OCI-LY7 (cell line): ENCODE measurements at regions of chr13 and their contacts with region 1.

Region 1: DNA sequence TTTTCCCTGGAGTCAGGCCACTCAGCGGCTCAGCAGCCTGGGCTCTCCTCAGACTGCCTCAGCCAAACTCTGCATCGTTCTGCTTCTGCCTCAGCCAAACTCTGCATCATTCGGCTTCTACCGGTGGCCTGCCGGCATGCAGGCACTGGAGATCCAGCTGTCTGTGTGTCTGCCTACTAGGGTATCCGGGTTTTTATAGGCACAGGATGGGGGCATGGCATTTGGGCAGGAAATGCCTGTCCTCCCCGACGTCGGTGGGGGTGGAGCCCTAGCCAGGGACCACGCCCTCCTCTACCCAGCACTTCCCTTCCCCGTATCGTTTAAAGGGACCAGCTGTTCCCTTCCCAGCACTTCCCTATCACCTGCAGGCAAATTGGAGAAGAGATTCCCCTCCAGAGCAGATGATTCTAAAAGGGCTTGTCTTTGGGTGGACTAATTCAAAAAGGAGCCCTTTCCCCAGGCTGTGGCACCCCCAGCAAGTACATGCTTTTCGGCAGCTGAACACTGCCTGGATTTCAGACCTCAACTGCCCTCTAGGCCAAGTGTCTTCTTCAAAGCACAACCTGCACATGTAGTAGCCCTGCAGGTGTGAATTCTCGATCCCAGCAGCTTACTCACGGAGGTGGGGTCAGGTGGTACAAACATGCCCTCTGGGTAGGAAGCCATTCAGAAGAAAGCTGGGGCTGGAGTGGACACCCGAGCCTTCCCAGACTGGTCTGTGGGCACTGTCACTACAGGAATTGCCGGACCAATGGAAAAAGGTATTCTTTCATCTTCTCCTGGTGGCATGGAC is 25.4 kb upstream of the GPR12 start:
- DNase-seq: peak; percentile 90
- H3K4me3 ChIP-seq: peak overlapping the region; percentile 68
- H3K27ac ChIP-seq: peak overlapping the region; percentile 86
- H3K4me1 ChIP-seq: peaks cover 28% of the 10 kb centered on the region
- CTCF ChIP-seq: no peak

Region 2: DNA sequence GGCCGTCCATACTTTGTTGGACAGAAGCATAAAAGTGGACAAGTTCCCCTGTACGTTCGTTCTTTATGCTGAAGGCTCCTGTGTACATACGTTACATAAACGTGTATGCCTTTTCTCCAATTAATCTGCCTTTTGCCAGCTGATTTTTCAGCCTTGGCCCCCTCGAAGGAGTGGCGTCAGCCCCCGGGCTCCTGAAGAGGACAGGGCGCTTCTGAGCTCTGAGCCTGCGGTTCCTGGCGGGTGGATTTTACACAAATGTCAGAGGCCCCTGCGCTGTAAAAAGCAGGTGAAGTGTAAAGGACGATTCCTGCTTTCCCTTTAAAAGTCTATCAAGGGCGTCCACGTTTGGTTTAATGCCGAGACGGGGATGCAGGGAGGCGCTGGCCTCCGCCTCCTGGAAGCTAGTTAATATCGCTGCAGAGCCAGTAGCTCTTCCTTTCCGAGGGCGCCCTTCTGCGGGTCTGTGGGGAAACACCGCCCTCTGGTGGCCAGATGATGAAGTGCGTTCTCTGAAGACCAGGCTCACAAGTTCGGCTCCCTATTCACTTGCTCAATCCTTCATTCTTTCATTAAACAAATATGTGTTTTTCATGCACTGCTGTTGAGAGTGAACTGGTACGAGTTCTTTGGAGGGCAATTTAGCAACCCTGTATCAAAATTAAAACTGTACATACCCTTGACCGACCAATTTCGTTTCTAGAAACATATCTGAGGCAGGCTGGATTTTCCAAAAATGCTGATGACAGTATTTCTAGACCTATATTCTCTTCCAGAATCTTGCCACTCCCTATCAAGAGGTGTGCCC is 87.4 kb before region 1 on chr13:
- CTCF ChIA-PET with region 1: no interaction called
- POLR2A ChIA-PET with region 1: no interaction called
- intact Hi-C with region 1: loop called (anchors 2 kb)
- DNase-seq: peak; percentile 73
- H3K4me3 ChIP-seq: no peak overlapping the region
- H3K27ac ChIP-seq: no peak overlapping the region
- H3K4me1 ChIP-seq: no peaks in the 10 kb centered on the region
- CTCF ChIP-seq: peak; percentile 97